ENCODE measurements at regions of chr15 and their contacts with region 1.

Region 1: GRCh38 chr15:74615508-74616365 is at the start of gene CLK3:
- DNase-seq: peak; percentile 92 to 99 (median 96)

Region 2: GRCh38 chr15:74373731-74374647 is 241.7 kb before region 1 on chr15:
- intact Hi-C with region 1: loop called (anchors 5 kb)
- DNase-seq: peak; percentile 76 to 98 (median 90)

Region 3: GRCh38 chr15:74460871-74461846 is 154.6 kb before region 1 on chr15 and contains the start of gene UBL7:
- intact Hi-C with region 1: loop called (anchors 5 kb)
- DNase-seq: peak; percentile 96 to 100 (median 98)

Region 4: DNA sequence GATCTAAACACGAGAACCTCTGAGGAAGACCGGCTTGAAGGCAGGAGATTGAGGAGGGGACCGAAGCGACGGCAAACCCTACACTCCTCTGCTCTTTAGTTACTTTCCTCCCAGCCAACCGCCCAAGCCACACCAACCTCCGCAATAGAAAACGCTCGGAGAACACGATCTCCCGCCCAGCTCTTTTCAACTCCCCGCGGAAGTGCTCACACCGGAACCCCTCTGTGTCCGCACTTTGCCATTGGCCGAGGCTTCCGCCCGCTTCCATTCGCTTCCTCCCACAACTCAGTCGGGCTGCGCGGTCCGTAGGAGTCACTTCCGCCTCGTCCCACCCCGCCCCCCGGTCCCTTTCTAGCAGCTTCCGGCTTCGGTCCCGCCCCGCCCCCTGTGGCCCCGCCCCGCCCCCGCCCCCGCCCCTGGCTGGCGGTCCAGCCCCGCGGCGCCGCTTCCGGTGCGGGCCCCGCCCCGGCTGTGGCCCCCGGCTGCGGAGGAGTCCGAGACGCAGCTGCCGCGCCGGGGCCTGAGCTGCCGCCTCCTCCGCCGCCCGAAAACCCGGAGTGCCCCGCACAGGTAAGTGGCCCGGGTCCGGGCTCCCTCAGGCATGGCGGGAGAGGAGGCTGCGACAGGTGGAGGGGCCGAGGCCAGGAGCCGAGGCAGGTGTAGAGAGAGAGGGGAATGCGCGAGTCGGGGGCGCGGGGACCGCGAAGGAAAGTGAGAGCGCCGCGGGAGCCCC is 74.8 kb before region 1 on chr15 and contains the start of gene ARID3B:
- intact Hi-C with region 1: loop called (anchors 1 kb)
- DNase-seq: peak; percentile 95 to 99 (median 96)

Region 5: GRCh38 chr15:74545880-74546656 is 69.7 kb before region 1 on chr15:
- intact Hi-C with region 1: loop called (anchors 1 kb)
- DNase-seq: peak; percentile 94 to 99 (median 98)

Region 6: GRCh38 chr15:74598126-74598842 is 17.5 kb before region 1 on chr15:
- intact Hi-C with region 1: loop called (anchors 1 kb)
- DNase-seq: peak; percentile 88 to 99 (median 96)

Region 7: DNA sequence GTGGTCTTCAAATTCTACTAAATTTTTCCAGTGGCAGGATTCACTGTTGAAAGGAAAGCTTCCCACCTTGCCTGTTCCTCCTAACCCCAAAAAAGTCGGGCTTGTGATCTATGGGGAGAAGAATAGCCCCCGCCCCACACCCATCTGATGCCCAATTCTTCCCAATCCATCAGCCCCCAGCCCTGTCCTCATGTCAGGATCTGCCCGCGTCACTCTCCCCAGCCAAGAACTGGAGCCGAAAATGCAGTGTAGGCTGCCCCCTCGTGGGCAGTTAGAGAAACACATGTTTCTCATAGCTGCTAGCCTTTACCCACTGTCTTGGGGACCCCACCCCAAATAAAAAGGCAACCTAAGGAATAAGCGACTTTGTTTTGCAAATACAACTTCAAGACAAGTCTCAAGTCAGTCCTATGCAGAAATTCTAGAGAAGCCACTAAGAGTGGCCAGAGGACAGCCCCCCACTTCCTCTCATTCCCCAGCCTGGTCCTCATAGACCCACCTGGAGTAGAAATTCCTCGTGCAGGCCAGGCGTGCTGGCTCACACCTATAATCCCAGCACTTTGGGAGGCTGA is 153.1 kb after region 1 on chr15:
- intact Hi-C with region 1: no loop called
- DNase-seq: peak; percentile 23 to 94 (median 69)

Region 8: GRCh38 chr15:75153087-75153486 is 537.4 kb after region 1 on chr15:
- intact Hi-C with region 1: no loop called
- DNase-seq: no peak

Measured in posterior cingulate gyrus (tissue), 11 donors.